ENCODE measurements at regions of chr12 and their contacts with region 1.

Region 1: DNA sequence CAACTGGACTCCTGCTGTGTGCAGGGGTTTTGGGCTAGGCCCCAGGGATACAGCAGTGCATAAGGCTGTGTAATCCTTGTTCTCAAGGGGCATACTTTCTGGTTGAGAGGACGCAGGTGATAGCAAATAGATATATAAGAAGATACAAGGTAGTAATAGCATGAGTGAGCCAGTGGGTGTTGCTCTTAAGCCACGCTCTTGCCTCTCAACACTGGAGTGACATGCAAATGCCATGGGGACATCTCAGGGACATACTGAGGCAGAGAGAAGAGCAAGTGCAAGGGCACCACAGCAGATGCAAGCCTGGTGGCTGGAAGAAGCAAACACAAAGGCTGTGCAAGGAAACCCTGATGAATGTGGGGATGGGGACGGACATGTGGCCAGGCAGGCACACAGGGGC is 223.3 kb downstream of the CHST11 start:
- DNase-seq: no peak
- H3K4me3 Mint-ChIP-seq: no peak overlapping the region
- H3K27ac Mint-ChIP-seq: peak overlapping the region; percentile 85
- H3K4me1 Mint-ChIP-seq: peaks cover 84% of the 10 kb centered on the region
- H3K27me3 Mint-ChIP-seq: no peaks in the 10 kb centered on the region

Region 2: DNA sequence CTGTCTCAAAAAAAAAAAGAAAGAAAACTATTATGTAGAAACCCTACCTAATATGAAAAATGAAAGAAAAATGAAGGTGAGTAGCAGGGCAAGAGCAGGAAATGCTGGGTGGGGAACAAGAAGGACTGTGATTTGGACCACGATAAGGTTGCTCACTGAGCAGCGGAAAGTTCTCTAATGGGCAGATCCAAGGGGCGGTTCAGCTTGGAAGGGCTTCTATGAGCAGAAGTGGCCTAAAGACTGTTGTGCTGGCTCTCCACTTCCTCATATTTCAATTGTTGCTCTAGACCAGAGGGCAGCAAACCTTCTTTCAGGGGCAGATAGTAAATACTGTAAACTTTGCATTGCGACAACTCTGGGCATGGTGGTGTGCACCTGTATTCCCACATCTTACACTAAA is 525.8 kb before region 1 on chr12:
- intact Hi-C with region 1: no loop called
- DNase-seq: no peak
- H3K4me3 Mint-ChIP-seq: no peak overlapping the region
- H3K27ac Mint-ChIP-seq: no peak overlapping the region
- H3K4me1 Mint-ChIP-seq: peaks cover 11% of the 10 kb centered on the region
- H3K27me3 Mint-ChIP-seq: peaks cover 24% of the 10 kb centered on the region

Region 3: GRCh38 chr12:104381731-104382480 is 298.2 kb before region 1 on chr12:
- intact Hi-C with region 1: loop called (anchors 1 kb)
- DNase-seq: peak; percentile 69
- H3K4me3 Mint-ChIP-seq: peak overlapping the region; percentile 52
- H3K27ac Mint-ChIP-seq: peak overlapping the region; percentile 33
- H3K4me1 Mint-ChIP-seq: peaks cover 20% of the 10 kb centered on the region
- H3K27me3 Mint-ChIP-seq: peaks cover 2% of the 10 kb centered on the region

Region 4: DNA sequence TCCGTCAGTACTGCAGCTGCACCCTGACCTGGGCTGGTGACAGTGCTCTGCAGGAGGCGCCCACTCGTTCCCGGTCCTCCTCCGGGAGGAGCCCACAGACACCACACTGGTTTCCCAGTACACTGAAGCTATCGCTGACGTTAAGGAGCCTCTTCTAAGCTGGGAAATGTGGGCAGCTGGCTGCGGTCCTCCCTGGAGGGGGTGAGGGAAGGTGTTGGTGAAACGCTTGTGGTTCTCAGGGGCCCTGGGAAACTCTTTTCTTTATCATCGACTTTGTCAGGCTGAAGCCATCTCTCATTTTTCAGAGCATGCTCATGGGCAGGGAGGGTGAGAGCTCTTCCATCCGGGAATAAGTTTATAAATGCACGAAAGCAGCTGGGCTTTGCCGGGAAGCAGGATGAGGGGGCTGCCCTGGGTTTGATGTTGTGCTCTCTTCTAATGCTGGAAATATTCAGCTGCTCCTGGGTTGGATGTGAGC is 47.3 kb before region 1 on chr12:
- intact Hi-C with region 1: no loop called
- DNase-seq: no peak
- H3K4me3 Mint-ChIP-seq: no peak overlapping the region
- H3K27ac Mint-ChIP-seq: peak overlapping the region; percentile 61
- H3K4me1 Mint-ChIP-seq: peaks cover 48% of the 10 kb centered on the region
- H3K27me3 Mint-ChIP-seq: no peaks in the 10 kb centered on the region

Region 5: DNA sequence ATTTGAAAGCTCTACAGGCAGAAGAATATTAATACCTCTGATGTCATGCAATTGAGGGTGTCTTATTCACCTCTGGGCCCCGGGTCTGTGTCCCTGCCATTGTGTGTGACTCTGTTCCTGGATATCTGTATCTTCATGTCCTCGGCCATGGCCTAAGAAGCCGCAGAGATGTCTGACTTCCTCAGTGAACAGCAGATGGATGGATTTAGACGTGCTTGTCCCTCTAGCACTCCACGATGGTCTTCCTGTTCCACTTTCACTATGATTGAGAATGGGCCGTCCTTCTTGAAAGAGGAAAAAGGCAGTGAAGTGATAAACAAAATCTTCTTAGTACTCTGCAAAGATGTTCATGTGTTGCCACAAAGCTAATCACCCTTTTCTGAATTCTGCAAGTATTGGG is 60.6 kb after region 1 on chr12:
- intact Hi-C with region 1: no loop called
- DNase-seq: peak; percentile 40
- H3K4me3 Mint-ChIP-seq: peak overlapping the region; percentile 71
- H3K27ac Mint-ChIP-seq: peak overlapping the region; percentile 82
- H3K4me1 Mint-ChIP-seq: peaks cover 75% of the 10 kb centered on the region
- H3K27me3 Mint-ChIP-seq: no peaks in the 10 kb centered on the region

Region 6: DNA sequence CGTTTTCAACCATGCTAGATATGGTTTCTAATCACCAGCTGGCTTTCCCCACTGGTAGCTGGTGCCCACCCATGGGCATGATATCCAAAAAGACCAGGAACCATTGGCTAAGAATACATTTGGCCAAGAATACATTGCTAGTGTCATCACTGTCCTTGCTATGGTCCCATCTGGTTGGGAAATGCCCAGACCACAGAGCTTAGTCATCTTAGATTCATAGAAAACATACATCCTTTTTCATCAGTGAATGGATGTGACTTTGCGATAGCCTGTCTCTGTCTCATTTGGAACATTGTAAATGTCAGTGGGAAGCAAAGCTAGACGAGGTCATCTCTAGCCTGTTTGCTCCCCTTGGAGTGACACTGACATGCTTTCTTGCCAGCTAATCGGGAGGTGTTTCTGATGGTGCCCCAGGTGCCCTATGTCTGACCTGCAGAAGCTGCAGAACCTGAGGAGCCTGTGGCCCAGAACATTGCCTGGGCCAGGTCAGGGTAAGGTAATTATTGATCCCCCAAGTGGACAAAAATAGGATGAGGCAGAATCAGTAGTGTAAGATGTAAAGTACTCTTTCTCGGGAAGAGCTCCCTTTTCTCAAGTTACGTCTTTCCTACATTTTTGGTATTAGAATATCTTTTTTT is 83.2 kb after region 1 on chr12:
- intact Hi-C with region 1: loop called (anchors 1 kb)
- DNase-seq: no peak
- H3K4me3 Mint-ChIP-seq: peak overlapping the region; percentile 76
- H3K27ac Mint-ChIP-seq: peak overlapping the region; percentile 91
- H3K4me1 Mint-ChIP-seq: peaks cover 70% of the 10 kb centered on the region
- H3K27me3 Mint-ChIP-seq: no peaks in the 10 kb centered on the region

Region 7: DNA sequence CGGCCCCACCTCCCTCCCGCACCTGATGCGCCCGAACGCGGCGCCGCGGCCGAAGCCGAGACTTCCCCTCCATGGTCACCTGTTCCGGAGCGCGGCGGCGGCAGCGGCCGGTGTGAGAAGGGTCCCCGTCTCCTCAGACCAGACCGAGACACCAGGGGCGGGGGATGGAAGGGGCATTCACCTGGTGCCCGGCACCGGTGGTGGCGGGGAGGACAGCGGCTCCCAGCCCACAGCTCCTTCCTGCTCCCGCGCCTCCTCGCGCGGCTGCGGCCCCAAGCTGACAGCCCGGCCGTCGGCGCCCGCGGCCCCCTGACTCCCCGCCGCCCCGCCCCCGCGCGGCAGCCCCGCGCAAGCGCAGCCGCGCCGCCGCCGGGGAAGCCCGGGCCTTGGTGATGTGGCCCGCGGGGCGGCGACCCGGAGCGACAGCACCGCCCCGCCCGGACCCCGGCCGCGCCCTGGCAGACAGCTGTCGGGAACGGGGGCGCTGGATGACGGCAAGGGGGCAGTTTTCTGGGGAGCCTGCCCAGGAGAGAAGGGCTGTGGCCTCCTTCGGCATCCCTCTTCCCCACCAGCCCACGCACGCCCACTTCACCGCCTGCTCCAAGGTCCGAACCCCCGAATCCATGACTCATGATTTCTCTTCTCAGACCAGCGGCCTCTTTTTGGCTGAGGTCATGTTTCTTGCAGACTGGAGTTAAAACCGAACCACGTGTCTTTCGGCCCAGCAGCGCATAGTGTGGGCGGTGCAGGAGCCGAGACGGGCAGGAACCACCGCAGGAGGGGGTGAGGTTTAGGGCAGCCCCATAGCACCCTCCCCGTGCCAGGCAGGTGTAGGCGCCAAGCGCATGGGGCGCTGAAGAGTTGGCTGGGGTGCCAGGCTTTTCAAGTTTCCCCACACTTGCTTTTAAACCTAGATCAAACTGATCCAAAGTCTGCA is 278.2 kb after region 1 on chr12 and contains the start of gene SLC41A2:
- intact Hi-C with region 1: loop called (anchors 5 kb)
- DNase-seq: peak; percentile 80
- H3K4me3 Mint-ChIP-seq: peak within 1 kb of the TSS; percentile 90
- H3K27ac Mint-ChIP-seq: peak within 1 kb of the TSS; percentile 96
- H3K4me1 Mint-ChIP-seq: peaks cover 44% of the 10 kb centered on the region
- H3K27me3 Mint-ChIP-seq: peaks cover 24% of the 10 kb centered on the region
- total RNA-seq, gene SLC41A2: 16.4 and 19.0 TPM in 2 replicates

Measured in activated T-helper 1 cell treated with anti-CD3 and anti-CD28 coated beads, Interleukin-12 subunit alpha, Interleukin-12 subunit beta, Interleukin-2, Interleukin-4 antibody, amounts not matched to agents 30 ng/mL and 10 ng/mL and 1 ng/mL, durations not matched to agents 14 hours and 24 hours and 36 hours (primary cell).